Naive thymus-derived CD4-positive, alpha-beta T cell (primary cell): ENCODE measurements at regions of chr14 and their contacts with region 1.

Region 1: GRCh38 chr14:75249251-75249957 is 29.2 kb upstream of the FOS start:
- DNase-seq: peak; percentile 46 to 96 (median 93)
- ATAC-seq: peak; percentile 86
- H3K4me3 ChIP-seq: peak overlapping the region; percentile 48
- H3K4me3 Mint-ChIP-seq: peak overlapping the region; percentile 58 to 83 (median 67)
- H3K27ac ChIP-seq: peak overlapping the region; percentile 81
- H3K27ac Mint-ChIP-seq: peak overlapping the region; percentile 83 to 98 (median 96)
- H3K4me1 ChIP-seq: peaks cover 51 to 61% of the 10 kb centered on the region in 2 donors
- H3K4me1 Mint-ChIP-seq: peaks cover 39 to 81% (median 72%) of the 10 kb centered on the region in 7 donors
- H3K27me3 ChIP-seq: no peaks in the 10 kb centered on the region
- H3K27me3 Mint-ChIP-seq: peaks cover 0 to 57% (median 0%) of the 10 kb centered on the region in 5 donors

Region 2: DNA sequence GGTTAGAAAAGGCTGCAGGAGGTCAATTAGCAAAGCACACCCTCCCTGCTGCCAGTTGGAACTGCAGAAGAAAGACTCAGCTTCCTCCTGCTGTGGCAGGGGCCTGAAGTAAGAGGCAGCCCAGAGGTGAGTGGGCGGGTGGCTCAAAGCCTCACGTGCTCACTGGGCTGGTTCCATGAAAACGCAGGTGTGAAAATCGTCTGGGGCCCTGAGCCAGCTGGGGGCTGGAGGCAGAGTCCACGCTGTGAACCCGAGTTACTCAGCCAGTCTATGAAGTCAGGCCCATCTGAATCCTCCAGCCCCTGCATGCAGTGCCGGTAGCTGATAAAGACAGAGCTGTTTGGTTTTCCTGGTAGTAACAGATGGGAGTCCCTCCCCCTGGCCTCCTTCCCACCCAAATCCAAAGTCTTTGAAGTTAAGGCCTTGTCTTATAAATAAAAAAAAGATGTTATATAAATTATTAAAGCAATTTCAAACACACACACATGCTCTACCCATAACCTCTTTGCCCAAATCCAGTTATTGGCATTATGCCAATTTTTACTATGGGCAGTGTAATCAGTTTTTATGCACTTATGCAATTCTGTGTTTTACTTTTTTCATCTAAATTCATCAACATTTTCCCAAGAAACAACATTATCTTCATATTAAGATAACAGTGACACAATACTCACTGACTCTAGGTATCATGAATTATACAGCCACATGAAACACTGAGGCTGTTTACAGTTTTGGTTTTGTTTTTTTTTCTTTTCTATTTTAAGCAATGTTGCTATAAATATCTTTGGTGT is 1477.4 kb before region 1 on chr14:
- CTCF ChIA-PET with region 1: no interaction called
- POLR2A ChIA-PET with region 1: no interaction called
- intact Hi-C with region 1: loop called in 1 of 2 experiments (anchors 5 kb)
- DNase-seq: peak in 8 of 9 donors; percentile 57 to 73 (median 65)
- ATAC-seq: peak; percentile 82
- H3K4me3 ChIP-seq: peak overlapping the region; percentile 24
- H3K4me3 Mint-ChIP-seq: peak overlapping the region; percentile 63 to 81 (median 74)
- H3K27ac ChIP-seq: peak overlapping the region; percentile 69
- H3K27ac Mint-ChIP-seq: peak overlapping the region; percentile 80 to 94 (median 92)
- H3K4me1 ChIP-seq: peaks cover 56 to 65% of the 10 kb centered on the region in 2 donors
- H3K4me1 Mint-ChIP-seq: peaks cover 57 to 79% (median 69%) of the 10 kb centered on the region in 7 donors
- H3K27me3 ChIP-seq: no peaks in the 10 kb centered on the region
- H3K27me3 Mint-ChIP-seq: no peaks in the 10 kb centered on the region

Region 3: DNA sequence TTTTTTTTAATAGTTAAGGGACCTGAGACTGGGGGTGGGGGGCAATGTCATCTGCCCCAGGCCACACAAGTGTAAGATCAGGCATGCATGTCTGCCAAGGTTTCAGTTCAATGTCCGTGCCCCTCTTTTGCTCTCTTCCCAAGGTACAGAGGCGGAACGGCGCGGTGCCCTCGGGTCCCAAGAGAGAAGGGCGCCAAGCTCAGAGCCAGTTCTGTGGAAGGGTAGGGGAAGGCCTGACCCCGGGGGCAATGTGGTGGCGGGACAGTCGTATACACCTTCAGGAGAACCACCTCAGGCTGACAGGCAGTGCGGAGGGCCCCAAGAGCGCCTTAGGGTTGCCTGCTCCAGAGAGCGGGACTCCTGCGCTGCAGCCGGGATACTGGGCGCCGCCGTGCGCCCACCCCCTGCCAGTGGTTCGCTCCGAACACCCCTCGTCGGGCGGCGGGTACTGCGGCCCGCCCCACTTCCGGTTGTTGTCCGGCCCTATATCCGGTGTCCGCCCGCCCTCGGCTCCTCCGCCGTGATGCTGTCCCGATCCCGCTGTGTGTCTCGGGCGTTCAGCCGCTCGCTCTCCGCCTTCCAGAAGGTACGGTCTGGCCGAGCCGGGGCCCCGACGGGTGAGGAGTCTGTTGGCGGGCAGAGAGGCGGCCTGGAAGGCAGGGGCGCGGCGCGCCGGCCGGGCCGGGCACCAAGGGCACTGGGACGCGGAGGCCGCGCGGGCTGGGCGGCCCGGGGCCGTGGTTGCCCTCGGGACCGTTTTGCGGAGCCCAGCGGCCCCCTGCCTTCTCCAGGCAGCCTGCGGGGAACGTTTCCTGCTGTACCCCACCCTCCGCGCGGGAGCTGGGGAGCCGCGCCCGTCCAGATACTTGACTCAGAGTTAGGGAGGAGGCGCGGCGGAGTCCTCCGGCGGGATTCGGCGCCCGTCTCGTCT is 367.7 kb before region 1 on chr14 and contains the start of gene DLST:
- CTCF ChIA-PET with region 1: no interaction called
- POLR2A ChIA-PET with region 1: no interaction called
- intact Hi-C with region 1: loop called in 1 of 2 experiments (anchors 1 kb)
- DNase-seq: peak; percentile 74 to 94 (median 81)
- ATAC-seq: peak; percentile 91
- H3K4me3 ChIP-seq: peak within 1 kb of the TSS; percentile 77
- H3K4me3 Mint-ChIP-seq: peak within 1 kb of the TSS; percentile 94 to 100 (median 98)
- H3K27ac ChIP-seq: peak within 1 kb of the TSS; percentile 91
- H3K27ac Mint-ChIP-seq: peak within 1 kb of the TSS; percentile 96 to 100 (median 99)
- H3K4me1 ChIP-seq: peaks cover 30 to 34% of the 10 kb centered on the region in 2 donors
- H3K4me1 Mint-ChIP-seq: peaks cover 49 to 82% (median 72%) of the 10 kb centered on the region in 7 donors
- H3K27me3 ChIP-seq: no peaks in the 10 kb centered on the region
- H3K27me3 Mint-ChIP-seq: no peaks in the 10 kb centered on the region
- total RNA-seq, gene DLST: 90.0 to 132 (median 96.5) TPM

Region 4: DNA sequence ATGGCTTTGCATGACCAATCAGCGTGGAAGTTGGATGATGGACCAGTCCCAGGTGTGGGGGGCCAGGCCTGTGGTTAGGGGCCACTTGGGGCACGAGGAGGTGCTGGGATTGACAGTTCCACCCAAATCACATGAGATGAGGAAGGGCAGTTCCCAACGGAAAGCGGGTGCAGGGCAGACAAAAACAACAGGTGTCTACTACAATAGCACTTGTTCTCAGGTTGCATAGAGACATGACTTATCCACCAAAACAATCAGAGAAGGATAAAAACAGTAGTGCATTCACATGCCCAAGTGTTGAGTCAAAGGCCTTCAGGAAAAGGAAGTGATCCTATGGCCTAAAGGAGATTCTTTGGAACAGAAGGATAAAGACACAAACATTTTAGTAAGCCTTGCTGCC is 261.3 kb before region 1 on chr14:
- CTCF ChIA-PET with region 1: no interaction called
- POLR2A ChIA-PET with region 1: no interaction called
- intact Hi-C with region 1: no loop called
- DNase-seq: no peak
- ATAC-seq: no peak
- H3K4me3 ChIP-seq: no peak overlapping the region
- H3K4me3 Mint-ChIP-seq: no peak overlapping the region
- H3K27ac ChIP-seq: no peak overlapping the region
- H3K27ac Mint-ChIP-seq: no peak overlapping the region
- H3K4me1 ChIP-seq: no peaks in the 10 kb centered on the region
- H3K4me1 Mint-ChIP-seq: peaks cover 0 to 1% (median 0%) of the 10 kb centered on the region in 7 donors
- H3K27me3 ChIP-seq: no peaks in the 10 kb centered on the region
- H3K27me3 Mint-ChIP-seq: peaks cover 0 to 3% (median 0%) of the 10 kb centered on the region in 5 donors

Region 5: DNA sequence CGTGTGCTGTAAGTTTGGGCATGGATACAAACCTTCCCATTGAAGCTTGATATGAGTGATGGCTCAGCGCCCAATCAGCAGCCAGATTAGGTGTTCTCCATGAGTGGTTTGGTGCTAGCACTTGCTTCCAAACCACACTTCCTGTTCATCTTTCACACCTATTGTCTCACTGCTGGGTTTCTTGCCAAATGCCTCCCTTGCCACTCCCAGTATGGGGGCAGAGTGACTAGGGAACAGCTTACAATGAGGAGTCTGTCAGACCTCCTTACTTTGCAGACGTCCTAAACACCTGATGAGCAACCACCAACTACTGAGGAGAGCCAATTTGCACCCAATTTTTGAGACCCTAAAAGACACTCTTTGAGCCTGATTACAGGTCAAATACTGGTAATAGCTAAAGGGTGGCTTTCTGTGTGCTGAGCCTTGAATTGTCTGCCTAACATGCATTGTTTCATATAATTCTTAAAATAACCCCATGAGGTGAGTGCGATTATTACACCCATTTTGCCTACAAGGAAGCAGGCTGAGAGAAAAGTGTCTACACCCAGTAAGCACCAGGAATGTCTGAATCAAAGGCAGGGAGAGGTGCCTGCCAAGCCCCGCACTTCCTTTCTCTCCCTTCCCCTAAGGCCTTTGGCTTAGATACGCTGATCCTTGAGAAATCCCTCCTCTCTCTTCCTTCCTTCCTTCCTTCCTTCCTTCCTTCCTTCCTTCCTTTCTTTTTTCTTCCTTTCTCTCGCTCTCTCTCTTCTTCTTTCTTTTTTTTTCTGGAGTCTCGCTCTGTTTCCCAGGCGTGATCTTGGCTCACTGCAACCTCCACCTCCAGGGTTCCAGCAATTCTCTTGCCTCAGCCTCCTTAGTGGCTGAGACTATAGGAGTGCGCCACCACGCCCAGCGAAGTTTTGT is 19.0 kb before region 1 on chr14:
- CTCF ChIA-PET with region 1: interaction called, 3 read pairs
- POLR2A ChIA-PET with region 1: interaction called, 6 read pairs
- intact Hi-C with region 1: loop called (anchors 1 kb)
- DNase-seq: peak in 6 of 9 donors; percentile 26 to 50 (median 41)
- ATAC-seq: peak; percentile 59
- H3K4me3 ChIP-seq: no peak overlapping the region
- H3K4me3 Mint-ChIP-seq: peak overlapping the region; percentile 3 to 79 (median 50)
- H3K27ac ChIP-seq: no peak overlapping the region
- H3K27ac Mint-ChIP-seq: peak overlapping the region; percentile 42 to 96 (median 73)
- H3K4me1 ChIP-seq: peaks cover 33 to 41% of the 10 kb centered on the region in 2 donors
- H3K4me1 Mint-ChIP-seq: peaks cover 43 to 75% (median 66%) of the 10 kb centered on the region in 7 donors
- H3K27me3 ChIP-seq: no peaks in the 10 kb centered on the region
- H3K27me3 Mint-ChIP-seq: peaks cover 0 to 22% (median 0%) of the 10 kb centered on the region in 5 donors

Region 6: DNA sequence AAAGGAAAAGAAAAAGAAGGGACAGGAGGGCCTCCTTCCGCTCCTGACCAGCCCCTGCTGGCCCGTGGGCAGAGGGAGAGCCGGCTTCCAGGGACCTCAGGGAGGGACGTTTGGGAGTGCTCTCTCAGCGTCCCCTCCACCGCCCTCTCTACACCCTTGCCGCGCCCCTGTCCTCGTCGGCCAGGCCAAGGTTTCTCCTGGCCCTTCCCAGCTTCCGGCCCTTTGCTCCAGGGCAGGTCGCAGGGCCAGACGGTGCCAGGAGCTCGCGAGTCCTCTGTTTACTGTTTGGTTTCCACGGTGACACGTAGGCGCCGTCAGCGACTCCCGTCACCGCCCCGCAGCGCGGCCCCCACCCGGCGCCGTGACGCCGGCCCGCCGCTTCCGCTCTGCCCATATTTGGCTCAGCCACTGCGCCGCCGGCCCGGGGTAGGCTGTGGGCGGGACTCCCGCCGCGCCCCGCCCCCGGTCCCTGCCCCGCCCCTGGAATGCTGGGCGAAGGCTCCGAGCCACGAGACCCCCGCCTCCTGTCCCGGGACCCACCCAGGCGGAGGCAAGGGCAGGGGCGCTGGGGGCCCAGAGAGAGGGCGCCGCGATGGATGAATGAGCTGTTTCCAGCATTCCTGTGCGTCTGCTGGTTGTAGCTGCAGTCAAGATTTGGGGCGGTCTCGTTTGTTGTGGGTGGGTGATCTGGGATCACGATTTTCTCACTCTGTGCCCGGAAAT is 44.7 kb after region 1 on chr14:
- CTCF ChIA-PET with region 1: interaction called, 8 read pairs
- POLR2A ChIA-PET with region 1: interaction called, 3 read pairs
- intact Hi-C with region 1: loop called (anchors 1 kb)
- DNase-seq: peak; percentile 92 to 98 (median 96)
- ATAC-seq: peak; percentile 92
- H3K4me3 ChIP-seq: peak overlapping the region; percentile 61
- H3K4me3 Mint-ChIP-seq: peak overlapping the region; percentile 79 to 93 (median 91)
- H3K27ac ChIP-seq: peak overlapping the region; percentile 96
- H3K27ac Mint-ChIP-seq: peak overlapping the region; percentile 85 to 97 (median 94)
- H3K4me1 ChIP-seq: peaks cover 17 to 25% of the 10 kb centered on the region in 2 donors
- H3K4me1 Mint-ChIP-seq: peaks cover 10 to 26% (median 22%) of the 10 kb centered on the region in 7 donors
- H3K27me3 ChIP-seq: no peaks in the 10 kb centered on the region
- H3K27me3 Mint-ChIP-seq: peaks cover 0 to 24% (median 0%) of the 10 kb centered on the region in 5 donors